ENCODE measurements at regions of chr7 and their contacts with region 1.

Region 1: GRCh38 chr7:138738551-138739335 is 37.6 kb upstream of the SVOPL start:
- DNase-seq: peak; percentile 76 to 90 (median 79)
- ATAC-seq: peak; percentile 96
- H3K4me3 ChIP-seq: no peak overlapping the region
- H3K27ac ChIP-seq: no peak overlapping the region
- H3K4me1 ChIP-seq: no peaks in the 10 kb centered on the region
- H3K27me3 ChIP-seq: peaks cover 3 to 19% of the 10 kb centered on the region in 2 experiments; a peak in 4 of 5 replicates
- CTCF ChIP-seq: peak; percentile 85 to 97 (median 97)
- EP300 ChIP-seq: no peak
- POLR2A ChIP-seq: no peak
- RAD21 ChIP-seq: peak; percentile 98

Region 2: GRCh38 chr7:137898839-137899721 is 839.7 kb before region 1 on chr7:
- CTCF ChIA-PET with region 1: interaction called, 20 read pairs
- POLR2A ChIA-PET with region 1: no interaction called
- in situ Hi-C with region 1: no loop called
- intact Hi-C with region 1: loop called (anchors 2 kb)
- DNase-seq: peak; percentile 87 to 91 (median 90)
- ATAC-seq: peak; percentile 99
- H3K4me3 ChIP-seq: no peak overlapping the region
- H3K27ac ChIP-seq: peak overlapping the region; percentile 58
- H3K4me1 ChIP-seq: peaks cover 3 to 13% of the 10 kb centered on the region in 2 experiments; a peak in 3 of 5 replicates
- H3K27me3 ChIP-seq: no peaks in the 10 kb centered on the region
- CTCF ChIP-seq: peak; percentile 96 to 99 (median 97)
- EP300 ChIP-seq: no peak
- POLR2A ChIP-seq: no peak
- RAD21 ChIP-seq: peak; percentile 81 to 95

Region 3: DNA sequence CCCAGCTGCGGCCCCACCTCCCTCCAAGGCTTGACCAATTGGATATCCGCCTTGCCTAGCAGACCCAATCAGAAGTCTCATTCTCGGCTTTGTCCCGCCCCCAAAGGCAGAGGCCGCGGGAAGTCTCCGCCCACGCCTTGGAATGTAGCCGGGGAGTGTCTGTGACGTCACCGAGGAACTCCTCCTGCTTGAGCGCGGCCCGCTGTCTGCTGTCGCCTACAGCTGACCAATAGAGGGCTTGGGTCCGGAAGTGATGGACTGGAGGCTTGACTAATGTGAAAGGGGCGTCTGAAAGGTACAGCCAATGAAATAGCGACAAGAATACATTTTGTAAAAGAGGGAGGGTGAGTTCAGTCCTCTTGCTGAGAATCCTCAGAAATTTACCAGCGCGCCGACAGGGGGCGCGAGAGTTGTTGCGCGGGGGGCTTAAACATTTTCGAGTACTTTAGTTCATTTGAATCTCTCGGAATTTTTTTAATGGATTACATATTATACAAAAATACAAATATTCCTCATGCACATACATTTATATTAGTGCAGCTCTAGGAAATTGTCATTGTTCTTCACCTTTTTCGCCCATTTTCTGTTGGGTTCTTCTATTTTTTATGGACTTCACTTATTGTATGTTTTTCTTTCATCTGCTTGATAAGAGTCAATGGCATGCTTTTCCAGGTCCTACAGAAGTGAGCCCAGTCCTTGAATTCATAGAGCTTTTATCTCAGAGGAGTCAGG is 736.5 kb before region 1 on chr7:
- CTCF ChIA-PET with region 1: no interaction called
- POLR2A ChIA-PET with region 1: no interaction called
- in situ Hi-C with region 1: no loop called
- intact Hi-C with region 1: loop called (anchors 5 kb)
- DNase-seq: peak; percentile 99 to 100 (median 99)
- ATAC-seq: peak; percentile 93
- H3K4me3 ChIP-seq: peak overlapping the region; percentile 82
- H3K27ac ChIP-seq: peak overlapping the region; percentile 77
- H3K4me1 ChIP-seq: peaks cover 13 to 32% of the 10 kb centered on the region in 2 experiments
- H3K27me3 ChIP-seq: no peaks in the 10 kb centered on the region
- CTCF ChIP-seq: peak; percentile 90 to 99 (median 99)
- EP300 ChIP-seq: 0 out of 2 replicates have a peak, but pooled peaks have one; percentile 25
- POLR2A ChIP-seq: no peak
- RAD21 ChIP-seq: peak; percentile 53 to 64

Region 4: DNA sequence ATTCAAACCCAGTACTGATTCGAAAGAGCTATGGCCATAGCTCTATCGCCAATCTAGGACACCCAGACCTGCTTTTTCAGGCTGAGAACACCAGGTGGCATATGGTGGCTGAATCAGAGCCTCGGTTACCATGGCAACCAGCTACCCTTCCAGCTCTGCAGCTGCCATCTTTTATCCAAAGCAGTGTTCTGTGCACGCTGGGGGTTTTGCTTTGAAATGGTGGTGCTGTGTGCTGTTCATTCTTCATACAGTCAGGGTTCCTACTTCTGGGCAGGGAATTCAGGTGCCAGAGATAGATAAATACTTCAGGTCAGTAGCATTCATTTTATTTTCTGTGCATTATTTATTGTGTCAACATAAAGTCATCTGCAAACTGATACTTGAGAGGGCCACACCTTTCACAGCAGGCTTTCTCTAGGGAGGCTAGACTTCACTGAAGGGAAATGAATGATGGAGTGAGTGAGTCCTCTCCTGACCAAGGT is 577.1 kb before region 1 on chr7:
- CTCF ChIA-PET with region 1: interaction called, 36 read pairs
- POLR2A ChIA-PET with region 1: no interaction called
- in situ Hi-C with region 1: no loop called
- intact Hi-C with region 1: loop called (anchors 1 kb)
- DNase-seq: peak; percentile 94 to 98 (median 96)
- ATAC-seq: peak; percentile 100
- H3K4me3 ChIP-seq: no peak overlapping the region
- H3K27ac ChIP-seq: no peak overlapping the region
- H3K4me1 ChIP-seq: no peaks in the 10 kb centered on the region
- H3K27me3 ChIP-seq: no peaks in the 10 kb centered on the region
- CTCF ChIP-seq: peak; percentile 83 to 96 (median 91)
- EP300 ChIP-seq: 0 out of 2 replicates have a peak, but pooled peaks have one; percentile 7
- POLR2A ChIP-seq: no peak
- RAD21 ChIP-seq: peak; percentile 96 to 97

Region 5: GRCh38 chr7:138382862-138383565 is 355.7 kb before region 1 on chr7:
- CTCF ChIA-PET with region 1: no interaction called
- POLR2A ChIA-PET with region 1: no interaction called
- in situ Hi-C with region 1: no loop called
- intact Hi-C with region 1: no loop called
- DNase-seq: no peak
- ATAC-seq: no peak
- H3K4me3 ChIP-seq: no peak overlapping the region
- H3K27ac ChIP-seq: no peak overlapping the region
- H3K4me1 ChIP-seq: peaks cover 5 to 10% of the 10 kb centered on the region in 2 experiments; a peak in 2 of 5 replicates
- H3K27me3 ChIP-seq: no peaks in the 10 kb centered on the region
- CTCF ChIP-seq: no peak
- EP300 ChIP-seq: no peak
- POLR2A ChIP-seq: no peak
- RAD21 ChIP-seq: no peak

Region 6: DNA sequence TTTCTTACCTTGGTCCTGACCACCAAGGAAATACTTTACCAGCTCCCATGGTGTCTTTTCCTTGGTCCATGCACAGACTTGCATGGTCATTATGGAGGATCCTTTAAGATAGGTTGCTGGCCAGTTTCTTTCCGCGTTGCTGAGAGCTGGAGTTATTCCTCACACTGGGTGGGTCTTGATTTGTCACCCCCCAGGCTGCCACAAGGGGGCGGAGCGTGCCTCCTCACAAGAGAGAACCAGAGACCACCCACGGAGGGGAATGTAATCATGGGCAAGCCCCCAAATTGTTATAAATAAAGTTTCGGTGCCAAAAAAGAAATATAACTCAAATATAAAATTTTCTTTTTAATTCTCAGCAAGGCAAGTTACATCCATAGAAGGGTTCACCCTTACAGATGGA is 289.2 kb before region 1 on chr7:
- CTCF ChIA-PET with region 1: no interaction called
- POLR2A ChIA-PET with region 1: no interaction called
- in situ Hi-C with region 1: no loop called
- intact Hi-C with region 1: loop called (anchors 1 kb)
- DNase-seq: peak in 3 of 4 experiments; percentile 34 to 72 (median 71)
- ATAC-seq: peak; percentile 94
- H3K4me3 ChIP-seq: no peak overlapping the region
- H3K27ac ChIP-seq: no peak overlapping the region
- H3K4me1 ChIP-seq: peaks cover 0 to 6% of the 10 kb centered on the region in 2 experiments; a peak in 2 of 5 replicates
- H3K27me3 ChIP-seq: no peaks in the 10 kb centered on the region; a peak in 1 of 5 replicates
- CTCF ChIP-seq: peak; percentile 64 to 80 (median 73)
- EP300 ChIP-seq: no peak
- POLR2A ChIP-seq: no peak
- RAD21 ChIP-seq: peak; percentile 20 to 63; a peak in 3 of 4 replicates